ENCODE measurements at regions of chr13 and their contacts with region 1.

Region 1: DNA sequence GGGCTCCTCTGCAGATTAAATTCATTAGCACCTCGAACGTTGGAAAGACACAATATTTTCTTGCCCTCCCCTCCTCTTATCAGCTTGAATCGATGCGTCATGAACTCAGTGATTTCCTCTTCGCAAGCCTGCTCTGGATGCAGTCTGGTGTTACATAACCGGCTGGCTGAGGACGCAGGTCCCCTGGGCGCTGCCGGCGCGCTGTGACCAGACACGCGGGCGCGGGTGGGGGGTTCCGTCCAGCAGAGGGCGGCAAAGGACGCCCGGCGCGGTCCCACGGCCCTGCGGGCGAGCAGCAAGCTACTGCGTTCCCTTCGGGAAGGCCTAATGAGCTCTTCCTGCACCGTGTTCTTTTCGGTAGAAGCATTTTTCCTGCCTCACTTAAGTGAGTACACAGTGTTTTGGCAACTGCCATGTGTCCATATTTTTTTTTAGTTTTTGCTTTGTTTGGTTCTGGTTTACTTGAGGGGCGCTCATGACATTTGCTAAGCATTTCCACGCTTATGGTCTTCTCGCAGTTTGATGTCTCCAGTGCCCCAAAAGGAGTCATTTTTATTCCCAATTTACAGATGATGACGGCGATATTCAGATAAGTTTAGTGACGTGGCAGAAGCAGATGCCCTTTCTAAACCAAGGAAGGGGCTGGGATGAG is 112.2 kb upstream of the MBNL2 start:
- DNase-seq: peak; percentile 85
- CTCF ChIP-seq: peak; percentile 89

Region 2: GRCh38 chr13:96632536-96633320 is 477.2 kb before region 1 on chr13:
- CTCF ChIA-PET with region 1: no interaction called
- POLR2A ChIA-PET with region 1: no interaction called
- DNase-seq: no peak
- CTCF ChIP-seq: no peak

Region 3: DNA sequence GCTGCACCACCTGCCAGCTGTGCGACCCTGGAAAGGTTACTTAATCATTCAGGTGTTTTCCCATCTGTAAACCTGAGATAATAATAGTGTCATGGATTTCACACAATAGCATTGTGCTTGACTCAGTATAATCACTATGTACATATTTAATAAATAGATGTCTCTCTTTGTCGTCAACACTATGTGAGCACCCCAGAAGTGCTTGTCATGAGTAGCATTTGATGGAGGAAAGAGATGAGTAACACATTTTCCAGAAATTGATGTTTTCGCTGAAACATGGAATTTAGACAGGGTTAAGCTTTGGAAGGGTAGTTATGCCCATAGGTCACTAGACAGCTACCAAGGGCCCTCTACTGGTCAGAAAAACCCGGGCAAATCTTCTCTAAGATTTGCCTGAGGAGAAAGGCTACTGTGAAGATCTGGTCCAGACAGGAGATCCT is 102.7 kb after region 1 on chr13:
- CTCF ChIA-PET with region 1: interaction called, 22 read pairs
- POLR2A ChIA-PET with region 1: no interaction called
- DNase-seq: peak; percentile 20
- CTCF ChIP-seq: peak; percentile 47

Region 4: GRCh38 chr13:97333983-97334382 is 224.0 kb after region 1 on chr13:
- CTCF ChIA-PET with region 1: interaction called, 15 read pairs
- POLR2A ChIA-PET with region 1: no interaction called
- DNase-seq: no peak
- CTCF ChIP-seq: no peak

Region 5: GRCh38 chr13:97352815-97353214 is 242.8 kb after region 1 on chr13:
- CTCF ChIA-PET with region 1: interaction called, 237 read pairs
- POLR2A ChIA-PET with region 1: interaction called, 6 read pairs
- DNase-seq: no peak
- CTCF ChIP-seq: no peak

Region 6: DNA sequence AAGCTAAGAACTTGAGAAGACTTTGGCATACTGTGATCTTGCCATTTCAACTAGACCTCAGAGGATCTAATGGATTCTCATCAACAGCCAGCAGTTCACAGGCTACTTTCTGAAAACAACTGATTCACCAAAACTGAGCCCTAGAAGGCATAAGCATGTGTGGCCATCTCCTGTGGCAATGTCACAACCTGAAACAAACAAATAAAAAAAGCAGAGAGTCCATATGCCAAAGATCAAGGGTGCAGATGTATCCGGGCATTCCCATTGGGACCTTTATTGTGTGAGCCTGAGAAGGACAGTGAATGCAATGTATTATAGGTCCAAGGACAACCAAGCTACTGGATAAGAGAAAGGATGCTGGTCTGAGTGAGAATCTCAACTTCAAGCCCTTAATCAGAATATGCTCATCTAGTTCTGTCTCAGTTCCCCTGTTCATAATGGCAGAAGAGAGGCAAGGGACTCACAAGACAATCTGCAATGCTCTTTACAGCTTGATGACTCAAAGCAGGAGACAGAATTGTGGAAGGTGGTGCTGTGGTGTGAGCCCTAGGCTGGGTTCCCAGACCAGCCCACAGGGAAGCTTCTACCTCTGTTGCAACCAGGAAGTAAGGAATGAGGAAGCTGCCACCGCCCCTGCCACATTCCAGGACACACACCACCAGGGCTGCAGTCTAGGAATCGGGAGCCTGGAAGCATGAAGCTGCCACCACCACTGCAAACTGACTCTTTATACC is 457.7 kb after region 1 on chr13:
- CTCF ChIA-PET with region 1: interaction called, 37 read pairs
- POLR2A ChIA-PET with region 1: no interaction called
- DNase-seq: peak; percentile 41
- CTCF ChIP-seq: no peak

Measured in GM10248 (cell line).